ENCODE measurements at regions of chr15 and their contacts with region 1.

Region 1: GRCh38 chr15:34223904-34224596 is 766 bp upstream of the EMC4 start:
- DNase-seq: no peak
- ATAC-seq: peak; percentile 23; the same call in 1 of the 2 replicates
- H3K4me3 ChIP-seq: peak overlapping the region; percentile 84 to 97
- H3K27ac ChIP-seq: peak overlapping the region; percentile 89
- H3K4me1 ChIP-seq: peaks cover 4% of the 10 kb centered on the region
- H3K27me3 ChIP-seq: no peaks in the 10 kb centered on the region
- CTCF ChIP-seq: no peak

Region 2: GRCh38 chr15:34275721-34276120 is 51.7 kb after region 1 on chr15:
- CTCF ChIA-PET with region 1: no interaction called
- POLR2A ChIA-PET with region 1: interaction called, 17 read pairs
- in situ Hi-C with region 1: no loop called
- intact Hi-C with region 1: no loop called
- DNase-seq: no peak
- ATAC-seq: no peak
- H3K4me3 ChIP-seq: no peak overlapping the region
- H3K27ac ChIP-seq: no peak overlapping the region
- H3K4me1 ChIP-seq: no peaks in the 10 kb centered on the region
- H3K27me3 ChIP-seq: no peaks in the 10 kb centered on the region
- CTCF ChIP-seq: no peak

Region 3: GRCh38 chr15:34514251-34514670 is 290.2 kb after region 1 on chr15:
- CTCF ChIA-PET with region 1: no interaction called
- POLR2A ChIA-PET with region 1: interaction called, 14 read pairs
- in situ Hi-C with region 1: no loop called
- intact Hi-C with region 1: no loop called
- DNase-seq: no peak
- ATAC-seq: peak; percentile 84
- H3K4me3 ChIP-seq: peak overlapping the region; percentile 58 to 66
- H3K27ac ChIP-seq: peak overlapping the region; percentile 30; the same call in 1 of the 2 replicates
- H3K4me1 ChIP-seq: no peaks in the 10 kb centered on the region
- H3K27me3 ChIP-seq: peaks cover 2% of the 10 kb centered on the region; the same call in 1 of the 2 replicates
- CTCF ChIP-seq: no peak

Region 4: DNA sequence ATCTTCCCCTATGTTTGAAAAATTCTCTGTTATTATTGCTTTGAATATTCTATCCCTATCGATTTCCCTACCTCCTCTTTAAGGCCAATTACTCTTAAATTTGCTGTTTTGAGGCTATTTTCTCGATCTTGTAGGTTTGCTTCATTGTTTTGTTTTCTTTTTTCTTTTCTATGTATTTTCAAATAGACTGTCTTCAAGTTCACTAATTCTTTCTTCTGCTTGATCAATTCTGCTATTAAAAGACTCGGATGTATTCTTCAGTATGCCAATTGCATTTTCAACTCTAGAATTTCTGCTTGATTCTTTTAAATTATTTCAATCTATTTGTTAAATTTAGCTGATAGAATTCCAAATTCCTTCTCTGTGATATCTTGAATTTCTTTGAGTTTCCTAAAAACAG is 1005.0 kb after region 1 on chr15:
- CTCF ChIA-PET with region 1: no interaction called
- POLR2A ChIA-PET with region 1: no interaction called
- in situ Hi-C with region 1: no loop called
- intact Hi-C with region 1: no loop called
- DNase-seq: no peak
- ATAC-seq: no peak
- H3K4me3 ChIP-seq: no peak overlapping the region
- H3K27ac ChIP-seq: no peak overlapping the region
- H3K4me1 ChIP-seq: no peaks in the 10 kb centered on the region
- H3K27me3 ChIP-seq: no peaks in the 10 kb centered on the region
- CTCF ChIP-seq: no peak